PC-3 (cell line): ENCODE measurements at regions of chr2 and their contacts with region 1.

Region 1: GRCh38 chr2:70132244-70133126 is 45.2 kb downstream of the PCBP1 start:
- DNase-seq: peak; percentile 52
- ATAC-seq: peak; percentile 75
- H3K4me3 ChIP-seq: peak overlapping the region; percentile 62
- H3K27ac ChIP-seq: peak overlapping the region; percentile 67
- H3K4me1 ChIP-seq: peaks cover 39% of the 10 kb centered on the region
- H3K27me3 ChIP-seq: no peaks in the 10 kb centered on the region
- CTCF ChIP-seq: no peak

Region 2: GRCh38 chr2:70094978-70095719 is 37.3 kb before region 1 on chr2:
- CTCF ChIA-PET with region 1: interaction called, 10 read pairs
- POLR2A ChIA-PET with region 1: interaction called, 7 read pairs
- intact Hi-C with region 1: no loop called
- DNase-seq: peak; percentile 90
- ATAC-seq: peak; percentile 91
- H3K4me3 ChIP-seq: no peak overlapping the region
- H3K27ac ChIP-seq: peak overlapping the region; percentile 56
- H3K4me1 ChIP-seq: peaks cover 17% of the 10 kb centered on the region
- H3K27me3 ChIP-seq: no peaks in the 10 kb centered on the region
- CTCF ChIP-seq: no peak

Region 3: GRCh38 chr2:70301344-70302194 is 169.1 kb after region 1 on chr2 and contains the start of gene FAM136A:
- CTCF ChIA-PET with region 1: no interaction called
- POLR2A ChIA-PET with region 1: no interaction called
- intact Hi-C with region 1: no loop called
- DNase-seq: peak; percentile 86
- ATAC-seq: peak; percentile 85
- H3K4me3 ChIP-seq: peak within 1 kb of the TSS; percentile 71
- H3K27ac ChIP-seq: peak within 1 kb of the TSS; percentile 17; the same call in 1 of the 2 replicates
- H3K4me1 ChIP-seq: peaks cover 7% of the 10 kb centered on the region
- H3K27me3 ChIP-seq: no peaks in the 10 kb centered on the region
- CTCF ChIP-seq: peak; percentile 78
- total RNA-seq, gene FAM136A: 67.6 and 70.8 TPM in 2 replicates